Esophagus muscularis mucosa (tissue), 4 donors: ENCODE measurements at regions of chr14 and their contacts with region 1.

Region 1: GRCh38 chr14:69398053-69398817 is at the starts of genes ERH and SLC39A9:
- DNase-seq: peak; percentile 99
- H3K4me3 ChIP-seq: peak within 1 kb of the TSS; percentile 77 to 90 (median 82)
- H3K27ac ChIP-seq: peak within 1 kb of the TSS; percentile 91 to 93 (median 92)
- H3K4me1 ChIP-seq: peaks cover 43 to 77% (median 67%) of the 10 kb centered on the region in 4 donors
- H3K27me3 ChIP-seq: no peaks in the 10 kb centered on the region
- CTCF ChIP-seq: no peak
- EP300 ChIP-seq: no peak
- POLR2A ChIP-seq: no peak
- total RNA-seq, gene ERH: 43.1 to 92.6 (median 64.2) TPM
- total RNA-seq, gene SLC39A9: 37.6 to 46.3 (median 42.3) TPM

Region 2: DNA sequence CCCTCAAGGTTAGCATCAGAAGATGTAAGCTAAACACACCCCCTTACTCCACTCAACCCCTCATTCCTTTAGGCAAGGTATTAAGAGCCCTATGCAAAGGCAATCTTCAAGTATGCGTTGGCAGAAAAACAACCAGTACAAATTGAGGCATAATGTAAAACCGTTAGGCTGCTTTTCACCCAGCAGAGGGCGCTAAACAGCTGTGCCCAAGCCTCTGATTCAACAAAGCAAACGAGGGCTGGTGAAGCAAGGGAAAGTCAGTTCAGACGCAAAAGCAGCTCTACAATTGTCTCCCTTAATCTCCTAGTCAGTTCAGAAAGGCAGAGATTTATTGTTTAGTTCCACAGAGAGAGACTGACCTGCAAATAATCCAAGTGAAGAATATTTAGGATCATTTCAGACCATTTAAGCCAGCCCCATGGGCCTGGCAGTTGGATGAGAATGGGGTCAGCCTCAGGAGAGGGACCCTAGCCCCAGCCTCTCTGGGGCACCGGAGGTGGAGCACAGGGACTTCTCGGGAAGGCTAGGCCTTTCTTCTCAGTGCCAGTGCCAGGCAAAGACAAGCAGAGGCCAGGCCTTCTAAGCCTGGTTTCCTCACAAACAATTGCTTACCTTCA is 268.9 kb before region 1 on chr14:
- intact Hi-C with region 1: loop called (anchors 10 kb)
- DNase-seq: no peak
- H3K4me3 ChIP-seq: no peak overlapping the region
- H3K27ac ChIP-seq: peak overlapping the region; percentile 70 to 73 (median 72)
- H3K4me1 ChIP-seq: peaks cover 39 to 80% (median 63%) of the 10 kb centered on the region in 4 donors
- H3K27me3 ChIP-seq: no peaks in the 10 kb centered on the region
- CTCF ChIP-seq: peak in 2 of 3 experiments; percentile 92
- EP300 ChIP-seq: no peak
- POLR2A ChIP-seq: no peak

Region 3: GRCh38 chr14:69772082-69773017 is 374.1 kb after region 1 on chr14:
- intact Hi-C with region 1: loop called (anchors 10 kb)
- DNase-seq: peak; percentile 17
- H3K4me3 ChIP-seq: no peak overlapping the region
- H3K27ac ChIP-seq: no peak overlapping the region
- H3K4me1 ChIP-seq: peaks cover 50 to 71% (median 59%) of the 10 kb centered on the region in 4 donors
- H3K27me3 ChIP-seq: no peaks in the 10 kb centered on the region
- CTCF ChIP-seq: no peak
- EP300 ChIP-seq: no peak
- POLR2A ChIP-seq: no peak